ENCODE measurements at regions of chr17 and their contacts with region 1.

Region 1: GRCh38 chr17:69235338-69235930 is 6.8 kb upstream of the ABCA10 start:
- DNase-seq: peak; percentile 86
- H3K4me3 Mint-ChIP-seq: no peak overlapping the region
- H3K27ac Mint-ChIP-seq: no peak overlapping the region
- H3K4me1 Mint-ChIP-seq: peaks cover 8% of the 10 kb centered on the region
- H3K27me3 Mint-ChIP-seq: no peaks in the 10 kb centered on the region
- CTCF ChIP-seq: peak; percentile 84

Region 2: GRCh38 chr17:68539548-68540467 is 695.6 kb before region 1 on chr17:
- CTCF ChIA-PET with region 1: no interaction called
- intact Hi-C with region 1: loop called (anchors 10 kb)
- DNase-seq: peak; percentile 13
- H3K4me3 Mint-ChIP-seq: no peak overlapping the region
- H3K27ac Mint-ChIP-seq: peak overlapping the region; percentile 16
- H3K4me1 Mint-ChIP-seq: no peaks in the 10 kb centered on the region
- H3K27me3 Mint-ChIP-seq: no peaks in the 10 kb centered on the region
- CTCF ChIP-seq: no peak

Region 3: DNA sequence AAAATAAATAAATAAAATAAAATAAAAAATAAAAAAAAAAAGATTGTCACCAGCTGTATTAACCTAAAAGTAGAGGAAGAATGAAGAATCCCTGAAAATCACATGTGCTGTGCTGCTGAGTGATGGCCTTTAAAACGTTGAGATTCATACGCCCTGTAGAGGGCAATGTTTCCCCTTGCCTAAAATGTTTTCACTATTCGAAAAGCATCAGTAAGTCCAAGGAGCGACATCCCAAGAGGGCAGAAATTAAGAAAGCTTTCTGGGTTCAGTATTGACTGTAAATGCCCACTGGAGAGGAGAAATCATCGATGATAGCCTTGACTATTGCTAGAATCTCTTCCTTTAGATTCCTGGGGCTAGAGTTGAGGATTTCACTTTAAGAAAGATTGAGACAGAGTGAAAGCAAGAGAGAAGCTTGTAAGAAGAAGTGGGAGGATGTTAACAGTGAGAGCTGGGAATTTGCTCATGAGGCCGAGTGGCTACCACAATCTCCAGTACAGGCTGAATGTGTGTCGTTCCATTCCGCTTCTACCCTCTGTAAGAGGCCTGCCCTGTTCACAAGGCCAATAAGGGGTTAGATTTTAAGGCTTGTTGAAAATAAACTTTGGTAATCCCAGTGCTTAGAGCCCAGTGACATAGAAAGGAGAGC is 463.4 kb before region 1 on chr17:
- CTCF ChIA-PET with region 1: interaction called, 3 read pairs
- intact Hi-C with region 1: loop called (anchors 1 kb)
- DNase-seq: peak; percentile 21
- H3K4me3 Mint-ChIP-seq: no peak overlapping the region
- H3K27ac Mint-ChIP-seq: no peak overlapping the region
- H3K4me1 Mint-ChIP-seq: peaks cover 19% of the 10 kb centered on the region
- H3K27me3 Mint-ChIP-seq: no peaks in the 10 kb centered on the region
- CTCF ChIP-seq: peak; percentile 58

Region 4: DNA sequence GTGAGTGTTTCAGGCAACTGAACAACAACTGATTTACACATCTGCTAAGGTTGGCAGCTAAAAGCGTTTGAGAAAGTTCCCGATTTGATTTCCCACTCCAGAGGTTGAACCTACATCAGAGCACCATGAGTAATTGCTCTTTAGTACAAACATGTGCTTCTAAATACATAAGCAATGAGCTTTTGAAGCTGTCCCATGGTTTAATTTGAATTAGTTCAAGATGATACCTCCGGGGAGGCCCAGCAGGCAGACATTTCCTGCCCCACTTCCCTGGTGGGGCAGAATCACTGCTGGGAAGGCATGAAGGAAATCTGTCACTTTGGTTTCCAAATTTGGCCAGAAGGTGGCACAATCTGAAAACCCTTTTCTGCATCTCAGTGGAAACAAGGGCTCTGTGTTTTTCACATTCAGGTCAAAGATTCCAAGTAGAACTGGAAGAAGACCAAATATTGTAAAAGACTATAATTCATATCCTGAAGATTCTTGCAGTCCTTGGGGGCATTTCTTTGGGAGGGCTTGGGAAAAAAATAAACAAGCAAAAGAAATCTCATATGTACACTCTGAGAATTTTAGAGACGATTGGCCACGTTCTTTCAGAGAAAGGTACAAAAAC is 458.1 kb before region 1 on chr17:
- CTCF ChIA-PET with region 1: interaction called, 3 read pairs
- intact Hi-C with region 1: loop called (anchors 1 kb)
- DNase-seq: peak; percentile 59
- H3K4me3 Mint-ChIP-seq: no peak overlapping the region
- H3K27ac Mint-ChIP-seq: peak overlapping the region; percentile 42
- H3K4me1 Mint-ChIP-seq: peaks cover 23% of the 10 kb centered on the region
- H3K27me3 Mint-ChIP-seq: no peaks in the 10 kb centered on the region
- CTCF ChIP-seq: peak; percentile 56

Region 5: GRCh38 chr17:68909066-68909465 is 326.4 kb before region 1 on chr17:
- CTCF ChIA-PET with region 1: no interaction called
- intact Hi-C with region 1: loop called (anchors 10 kb)
- DNase-seq: peak; percentile 18
- H3K4me3 Mint-ChIP-seq: no peak overlapping the region
- H3K27ac Mint-ChIP-seq: peak overlapping the region; percentile 86
- H3K4me1 Mint-ChIP-seq: peaks cover 9% of the 10 kb centered on the region
- H3K27me3 Mint-ChIP-seq: no peaks in the 10 kb centered on the region
- CTCF ChIP-seq: no peak

Region 6: GRCh38 chr17:68972119-68972704 is 263.2 kb before region 1 on chr17:
- CTCF ChIA-PET with region 1: no interaction called
- intact Hi-C with region 1: loop called (anchors 2 kb)
- DNase-seq: peak; percentile 5
- H3K4me3 Mint-ChIP-seq: no peak overlapping the region
- H3K27ac Mint-ChIP-seq: no peak overlapping the region
- H3K4me1 Mint-ChIP-seq: no peaks in the 10 kb centered on the region
- H3K27me3 Mint-ChIP-seq: no peaks in the 10 kb centered on the region
- CTCF ChIP-seq: peak; percentile 41

Region 7: GRCh38 chr17:69067274-69068047 is 168.0 kb before region 1 on chr17:
- CTCF ChIA-PET with region 1: no interaction called
- intact Hi-C with region 1: loop called (anchors 2 kb)
- DNase-seq: no peak
- H3K4me3 Mint-ChIP-seq: no peak overlapping the region
- H3K27ac Mint-ChIP-seq: no peak overlapping the region
- H3K4me1 Mint-ChIP-seq: no peaks in the 10 kb centered on the region
- H3K27me3 Mint-ChIP-seq: no peaks in the 10 kb centered on the region
- CTCF ChIP-seq: no peak